ENCODE measurements at regions of chr1 and their contacts with region 1.

Region 1: GRCh38 chr1:168734946-168735345 is 5.9 kb upstream of the DPT start:
- DNase-seq: no peak
- H3K4me3 ChIP-seq: no peak overlapping the region
- H3K27ac ChIP-seq: no peak overlapping the region
- H3K4me1 ChIP-seq: no peaks in the 10 kb centered on the region
- H3K27me3 ChIP-seq: no peaks in the 10 kb centered on the region
- CTCF ChIP-seq: no peak
- POLR2A ChIP-seq: no peak

Region 2: GRCh38 chr1:170126696-170127095 is 1391.8 kb after region 1 on chr1:
- intact Hi-C with region 1: loop called (anchors 10 kb)
- DNase-seq: no peak
- H3K4me3 ChIP-seq: no peak overlapping the region
- H3K27ac ChIP-seq: no peak overlapping the region
- H3K4me1 ChIP-seq: no peaks in the 10 kb centered on the region
- H3K27me3 ChIP-seq: no peaks in the 10 kb centered on the region
- CTCF ChIP-seq: no peak
- POLR2A ChIP-seq: no peak